Activated naive CD4-positive, alpha-beta T cell treated with anti-CD3 and anti-CD28 coated beads for 36 hours (primary cell): ENCODE measurements at regions of chr18 and their contacts with region 1.

Region 1: DNA sequence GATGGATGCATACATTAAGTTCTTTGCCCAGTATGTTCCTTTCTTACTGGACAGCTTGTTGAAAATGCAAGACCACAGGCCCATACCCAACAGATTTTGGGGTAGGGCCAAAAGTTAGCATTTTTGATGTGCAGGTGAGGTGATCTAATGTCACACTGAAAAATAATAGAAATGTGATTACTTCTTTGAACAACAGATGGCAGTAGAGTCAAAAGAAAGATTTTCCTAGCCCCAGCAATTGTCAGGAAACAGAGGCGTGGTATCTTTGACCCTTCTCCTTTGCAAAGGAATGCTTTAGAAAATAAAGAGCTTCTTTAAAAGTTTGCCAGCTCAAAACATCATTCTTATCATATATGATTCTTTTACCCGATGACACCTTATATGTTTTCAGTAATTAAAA is 343.6 kb upstream of the SYT4 start:
- DNase-seq: no peak
- H3K4me3 Mint-ChIP-seq: no peak overlapping the region
- H3K27ac Mint-ChIP-seq: no peak overlapping the region
- H3K4me1 Mint-ChIP-seq: no peaks in the 10 kb centered on the region
- H3K27me3 Mint-ChIP-seq: no peaks in the 10 kb centered on the region

Region 2: DNA sequence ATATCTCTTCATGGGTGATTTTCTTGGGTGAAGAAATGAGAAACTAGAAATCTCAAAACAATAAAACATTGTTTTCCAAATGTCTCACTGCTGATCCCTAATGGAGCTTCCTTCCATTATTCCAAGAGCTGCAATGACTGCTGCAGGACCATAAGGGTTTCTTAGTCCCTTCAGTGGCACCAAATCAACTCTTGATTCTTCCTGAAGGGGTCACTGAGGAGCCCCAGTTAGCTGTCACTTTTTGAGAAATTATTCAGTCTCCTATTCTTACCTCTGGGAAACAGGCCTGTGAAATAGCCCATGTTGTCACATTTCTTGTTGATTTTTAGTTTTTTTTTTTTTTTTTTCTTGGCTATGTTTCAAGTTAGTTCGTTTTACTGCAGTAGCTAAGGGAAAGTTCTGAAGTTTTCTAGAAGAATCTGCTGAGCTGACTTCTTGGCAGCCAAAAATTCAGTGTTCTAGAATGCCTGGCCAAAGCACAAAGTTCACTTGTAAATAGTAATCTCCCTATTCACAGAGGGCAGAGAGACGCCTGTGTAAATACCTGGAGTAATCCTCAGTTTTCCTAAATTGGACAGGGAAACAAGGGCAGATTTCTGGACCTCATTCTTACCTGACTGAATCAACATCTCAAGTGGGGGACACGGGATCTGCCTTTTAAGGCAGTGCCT is 985.4 kb before region 1 on chr18:
- CTCF ChIA-PET with region 1: no interaction called
- intact Hi-C with region 1: no loop called
- DNase-seq: no peak
- H3K4me3 Mint-ChIP-seq: no peak overlapping the region
- H3K27ac Mint-ChIP-seq: no peak overlapping the region
- H3K4me1 Mint-ChIP-seq: no peaks in the 10 kb centered on the region
- H3K27me3 Mint-ChIP-seq: no peaks in the 10 kb centered on the region

Region 3: DNA sequence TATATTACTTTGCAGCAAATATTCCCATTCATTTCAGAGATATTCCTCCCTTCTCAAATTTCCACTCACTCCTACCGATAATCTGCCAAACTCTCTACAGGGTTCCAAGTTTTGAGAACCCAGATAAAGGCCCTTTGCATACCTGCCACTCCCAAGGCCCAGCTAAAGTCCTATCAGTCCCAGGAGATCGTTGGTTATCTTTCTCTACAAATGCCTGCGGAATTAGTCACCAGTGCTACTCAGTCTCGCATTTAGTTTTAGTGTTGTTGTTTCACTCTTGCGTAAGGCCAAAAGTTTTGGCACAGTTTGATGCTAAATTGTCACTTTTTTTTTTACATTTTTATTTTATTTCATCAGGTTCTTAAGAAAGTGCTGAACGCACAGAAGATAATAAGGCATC is 1030.5 kb after region 1 on chr18:
- CTCF ChIA-PET with region 1: no interaction called
- intact Hi-C with region 1: loop called (anchors 10 kb)
- DNase-seq: no peak
- H3K4me3 Mint-ChIP-seq: no peak overlapping the region
- H3K27ac Mint-ChIP-seq: no peak overlapping the region
- H3K4me1 Mint-ChIP-seq: no peaks in the 10 kb centered on the region
- H3K27me3 Mint-ChIP-seq: peaks cover 3% of the 10 kb centered on the region

Region 4: GRCh38 chr18:44895176-44895798 is 1274.4 kb after region 1 on chr18:
- CTCF ChIA-PET with region 1: no interaction called
- intact Hi-C with region 1: loop called (anchors 2 kb)
- DNase-seq: peak; percentile 71
- H3K4me3 Mint-ChIP-seq: no peak overlapping the region
- H3K27ac Mint-ChIP-seq: no peak overlapping the region
- H3K4me1 Mint-ChIP-seq: peaks cover 24% of the 10 kb centered on the region
- H3K27me3 Mint-ChIP-seq: no peaks in the 10 kb centered on the region

Region 5: GRCh38 chr18:45212181-45213039 is 1591.5 kb after region 1 on chr18:
- CTCF ChIA-PET with region 1: no interaction called
- intact Hi-C with region 1: loop called (anchors 1 kb)
- DNase-seq: peak; percentile 84
- H3K4me3 Mint-ChIP-seq: no peak overlapping the region
- H3K27ac Mint-ChIP-seq: no peak overlapping the region
- H3K4me1 Mint-ChIP-seq: no peaks in the 10 kb centered on the region
- H3K27me3 Mint-ChIP-seq: no peaks in the 10 kb centered on the region

Region 6: GRCh38 chr18:45384137-45384961 is 1763.4 kb after region 1 on chr18:
- CTCF ChIA-PET with region 1: interaction called, 4 read pairs
- intact Hi-C with region 1: loop called (anchors 1 kb)
- DNase-seq: peak; percentile 59
- H3K4me3 Mint-ChIP-seq: no peak overlapping the region
- H3K27ac Mint-ChIP-seq: no peak overlapping the region
- H3K4me1 Mint-ChIP-seq: no peaks in the 10 kb centered on the region
- H3K27me3 Mint-ChIP-seq: peaks cover 23% of the 10 kb centered on the region